ENCODE measurements at regions of chr19 and their contacts with region 1.

Region 1: DNA sequence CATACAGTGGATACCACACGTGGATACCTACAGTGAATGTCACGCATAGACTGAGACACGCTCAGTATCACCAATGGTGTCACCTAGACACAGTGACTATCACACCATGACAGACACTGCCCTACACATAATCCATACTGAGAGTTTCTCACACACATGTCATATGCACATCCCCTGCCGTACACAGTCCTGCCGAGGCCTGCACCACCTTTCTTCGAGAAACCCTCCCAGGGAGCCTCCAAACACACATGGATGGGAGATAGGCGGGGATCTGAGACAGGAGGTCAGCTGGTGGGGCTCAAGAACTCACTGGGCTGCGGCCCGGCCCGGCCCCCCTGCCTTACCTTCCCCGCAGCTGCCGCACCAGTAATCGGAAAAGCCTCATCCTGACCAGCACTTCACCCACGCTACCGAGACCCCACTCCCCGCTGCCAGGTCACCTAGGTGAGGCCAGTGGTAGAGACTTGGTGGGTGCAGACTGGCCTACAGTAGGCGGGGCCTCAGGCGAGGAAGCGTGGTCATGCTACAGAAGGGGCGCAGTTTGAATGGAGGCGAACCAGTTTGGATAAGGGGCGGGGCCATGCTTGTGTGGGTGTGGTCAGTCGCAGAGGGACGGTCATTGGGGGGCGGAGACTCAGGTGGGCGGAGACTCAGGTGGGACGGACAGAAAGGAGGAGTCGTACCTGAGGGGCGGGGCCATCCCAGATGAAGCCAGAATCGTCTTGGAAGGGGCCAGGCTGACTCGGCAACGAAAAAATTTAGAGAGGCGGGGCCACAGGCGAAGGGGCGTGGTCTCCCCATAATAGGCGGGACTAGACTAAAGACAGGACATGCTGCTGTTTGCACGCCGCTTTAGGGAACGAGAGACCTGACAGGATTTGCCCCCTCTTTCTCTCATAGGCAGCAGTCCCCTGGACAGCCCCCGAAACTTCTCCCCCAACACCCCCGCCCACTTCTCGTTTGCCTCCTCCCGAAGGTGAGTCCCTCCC is 2.1 kb downstream of the MAST1 start:
- DNase-seq: peak in 2 of 3 donors; percentile 17 to 26
- H3K4me3 ChIP-seq: peak overlapping the region in 2 of 3 experiments; percentile 9 to 66
- H3K4me3 Mint-ChIP-seq: peak overlapping the region; percentile 34 to 85
- H3K27ac ChIP-seq: no peak overlapping the region
- H3K27ac Mint-ChIP-seq: no peak overlapping the region
- H3K4me1 ChIP-seq: peaks cover 15 to 31% of the 10 kb centered on the region in 2 donors
- H3K4me1 Mint-ChIP-seq: peaks cover 24% of the 10 kb centered on the region
- H3K27me3 ChIP-seq: peaks cover 54 to 75% of the 10 kb centered on the region in 2 donors
- H3K27me3 Mint-ChIP-seq: peaks cover 69 to 85% (median 76%) of the 10 kb centered on the region in 3 donors
- CTCF ChIP-seq: no peak

Region 2: GRCh38 chr19:12806239-12807081 is 33.9 kb before region 1 on chr19 and contains the start of gene RNASEH2A:
- intact Hi-C with region 1: loop called in 1 of 2 experiments (anchors 5 kb)
- DNase-seq: peak; percentile 82 to 89 (median 86)
- H3K4me3 ChIP-seq: peak within 1 kb of the TSS; percentile 61 to 77 (median 63)
- H3K4me3 Mint-ChIP-seq: peak within 1 kb of the TSS; percentile 83 to 92
- H3K27ac ChIP-seq: peak within 1 kb of the TSS; percentile 2 to 36
- H3K27ac Mint-ChIP-seq: peak within 1 kb of the TSS; percentile 69 to 90 (median 79)
- H3K4me1 ChIP-seq: peaks cover 20 to 26% of the 10 kb centered on the region in 2 donors
- H3K4me1 Mint-ChIP-seq: peaks cover 23% of the 10 kb centered on the region
- H3K27me3 ChIP-seq: peaks cover 4 to 18% of the 10 kb centered on the region in 2 donors
- H3K27me3 Mint-ChIP-seq: peaks cover 10 to 18% (median 14%) of the 10 kb centered on the region in 3 donors
- CTCF ChIP-seq: no peak
- polyA plus RNA-seq, gene RNASEH2A: 8.7 to 21.5 (median 15.2) TPM

Region 3: GRCh38 chr19:12965017-12965811 is 124.8 kb after region 1 on chr19:
- intact Hi-C with region 1: no loop called
- DNase-seq: peak; percentile 65 to 74 (median 72)
- H3K4me3 ChIP-seq: peak overlapping the region; percentile 8 to 79 (median 28)
- H3K4me3 Mint-ChIP-seq: peak overlapping the region; percentile 83 to 89
- H3K27ac ChIP-seq: peak overlapping the region in 1 of 2 donors; percentile 16
- H3K27ac Mint-ChIP-seq: peak overlapping the region in 4 of 7 donors; percentile 53 to 93 (median 68)
- H3K4me1 ChIP-seq: peaks cover 7 to 10% of the 10 kb centered on the region in 2 donors
- H3K4me1 Mint-ChIP-seq: peaks cover 6% of the 10 kb centered on the region
- H3K27me3 ChIP-seq: no peaks in the 10 kb centered on the region
- H3K27me3 Mint-ChIP-seq: peaks cover 1 to 6% (median 5%) of the 10 kb centered on the region in 3 donors
- CTCF ChIP-seq: peak; percentile 99

Region 4: DNA sequence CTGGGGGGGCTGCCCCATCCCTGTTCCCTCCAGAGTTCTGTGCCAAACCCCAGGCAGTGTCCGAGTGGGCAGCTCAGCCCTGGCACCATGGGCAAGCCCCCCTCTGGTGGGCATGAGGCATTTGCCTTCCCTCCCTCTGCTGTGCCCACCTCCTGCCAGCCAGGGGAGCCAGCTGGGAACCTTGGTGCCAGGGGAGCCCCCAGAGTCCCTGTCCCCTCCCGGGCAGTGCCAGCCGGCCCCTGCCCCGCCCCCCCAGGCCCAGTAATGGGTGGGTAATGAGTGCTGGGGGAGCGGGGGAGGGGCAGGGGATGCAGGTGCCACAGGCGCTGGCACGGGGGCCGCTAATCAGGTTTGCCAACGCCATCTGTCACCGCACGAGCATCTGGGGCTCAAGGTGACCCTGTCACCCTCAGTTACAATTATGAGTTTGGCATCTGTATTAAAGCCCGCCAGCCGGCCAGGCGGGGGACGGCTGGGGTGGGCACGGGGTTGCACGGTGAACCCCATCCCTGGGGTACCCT is 134.9 kb after region 1 on chr19:
- intact Hi-C with region 1: no loop called
- DNase-seq: no peak
- H3K4me3 ChIP-seq: no peak overlapping the region
- H3K4me3 Mint-ChIP-seq: no peak overlapping the region
- H3K27ac ChIP-seq: no peak overlapping the region
- H3K27ac Mint-ChIP-seq: no peak overlapping the region
- H3K4me1 ChIP-seq: no peaks in the 10 kb centered on the region
- H3K4me1 Mint-ChIP-seq: peaks cover 2% of the 10 kb centered on the region
- H3K27me3 ChIP-seq: peaks cover 0 to 2% of the 10 kb centered on the region in 2 donors
- H3K27me3 Mint-ChIP-seq: peaks cover 2 to 10% (median 7%) of the 10 kb centered on the region in 3 donors
- CTCF ChIP-seq: no peak

Measured in CD14-positive monocyte (primary cell).